Activated CD8-positive, alpha-beta memory T cell treated with anti-CD3 and anti-CD28 coated beads, Interleukin-2, amount 10 ng/mL, durations not matched to agents 7 days and 5 days (primary cell): ENCODE measurements at regions of chr7 and their contacts with region 1.

Region 1: GRCh38 chr7:106717955-106718871 is 57.3 kb upstream of the CCDC71L start:
- DNase-seq: peak; percentile 82
- ATAC-seq: peak; percentile 100
- H3K4me3 Mint-ChIP-seq: no peak overlapping the region
- H3K27ac Mint-ChIP-seq: no peak overlapping the region
- H3K4me1 Mint-ChIP-seq: peaks cover 10% of the 10 kb centered on the region
- H3K27me3 Mint-ChIP-seq: no peaks in the 10 kb centered on the region

Region 2: DNA sequence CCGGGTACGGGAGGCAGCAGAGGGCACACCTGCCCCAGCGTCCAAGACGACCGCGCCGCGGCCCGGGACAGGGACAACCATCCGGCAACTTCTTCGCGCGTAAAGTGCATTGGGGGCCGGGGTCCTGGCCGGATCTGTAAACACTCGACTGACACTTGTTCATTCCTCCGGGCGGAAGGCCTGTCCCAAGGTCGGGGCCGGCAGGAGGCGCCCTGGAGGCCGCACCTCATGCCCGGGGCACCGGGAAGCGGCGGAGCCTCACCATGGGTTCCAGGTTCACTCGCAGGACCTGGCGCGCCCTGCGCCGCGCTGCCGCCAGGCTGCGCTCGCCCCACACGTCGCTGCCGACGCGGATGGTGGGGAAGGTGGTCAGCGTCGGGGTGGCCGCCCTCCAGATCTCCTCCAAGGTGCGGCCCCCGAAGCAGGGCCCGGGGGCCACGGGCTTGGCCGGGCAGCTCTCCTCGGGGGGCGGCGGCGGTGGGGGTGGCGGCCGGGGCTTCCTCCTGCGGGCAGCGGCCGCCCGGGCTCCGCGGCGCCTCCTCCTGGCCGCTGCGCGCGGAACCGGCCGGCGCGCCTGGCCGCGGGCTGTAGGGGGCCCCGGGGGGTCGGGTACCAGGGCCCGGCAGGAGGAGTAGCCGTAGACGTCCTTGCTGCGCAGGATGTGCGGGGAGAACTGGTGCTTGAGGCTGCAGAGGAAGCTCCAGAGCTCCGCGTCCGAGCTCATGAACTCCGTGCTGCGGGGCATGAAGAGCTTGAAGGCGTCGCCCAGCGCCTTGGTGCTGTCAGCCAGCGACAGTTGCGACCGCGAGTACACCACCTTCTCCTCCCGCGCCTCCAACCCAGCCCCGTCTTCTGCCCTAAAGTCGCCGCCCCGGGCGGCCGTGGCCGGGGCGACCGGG is 58.0 kb before region 1 on chr7:
- CTCF ChIA-PET with region 1: interaction called, 33 read pairs
- DNase-seq: peak; percentile 89
- ATAC-seq: peak; percentile 70
- H3K4me3 Mint-ChIP-seq: peak overlapping the region; percentile 78
- H3K27ac Mint-ChIP-seq: peak overlapping the region; percentile 89
- H3K4me1 Mint-ChIP-seq: peaks cover 26% of the 10 kb centered on the region
- H3K27me3 Mint-ChIP-seq: no peaks in the 10 kb centered on the region

Region 3: DNA sequence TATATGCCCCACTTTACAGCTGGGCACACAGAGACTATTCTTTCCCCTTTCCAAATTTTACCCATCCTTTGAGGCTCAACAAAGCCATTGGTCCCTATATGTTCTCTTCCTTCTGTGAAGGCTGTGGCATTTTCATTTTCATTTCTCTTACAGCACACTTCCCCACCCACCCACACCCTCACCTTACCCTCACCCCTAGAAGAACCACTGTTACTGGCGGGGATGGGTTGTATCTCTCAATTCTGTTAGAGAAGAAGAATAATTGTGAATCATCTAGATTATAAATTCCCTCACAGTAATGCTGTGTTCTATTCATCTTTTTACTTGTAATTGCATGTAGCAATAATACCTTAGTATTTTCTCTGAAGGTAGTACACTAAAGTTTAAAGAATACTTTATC is 47.1 kb before region 1 on chr7:
- CTCF ChIA-PET with region 1: no interaction called
- DNase-seq: no peak
- ATAC-seq: no peak
- H3K4me3 Mint-ChIP-seq: no peak overlapping the region
- H3K27ac Mint-ChIP-seq: no peak overlapping the region
- H3K4me1 Mint-ChIP-seq: peaks cover 6% of the 10 kb centered on the region
- H3K27me3 Mint-ChIP-seq: no peaks in the 10 kb centered on the region

Region 4: DNA sequence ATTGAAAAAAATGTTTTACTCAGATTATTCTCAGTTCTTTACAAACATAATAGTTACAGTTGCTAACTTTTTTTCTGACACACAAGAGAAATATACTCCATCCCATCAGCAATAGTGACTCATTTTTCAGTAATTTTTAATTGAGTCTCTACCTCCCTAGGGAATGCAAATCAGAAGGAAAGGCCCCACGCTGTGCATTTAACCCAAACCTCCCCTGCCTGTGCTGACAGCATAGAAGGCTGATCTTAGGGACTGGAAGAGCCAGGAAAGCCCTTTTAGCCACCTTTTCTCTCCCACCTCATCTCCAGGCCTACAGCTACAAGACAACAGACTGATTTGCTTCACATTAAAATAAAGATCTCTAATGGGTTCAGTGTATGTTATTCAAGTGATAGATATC is 122.1 kb after region 1 on chr7:
- CTCF ChIA-PET with region 1: no interaction called
- DNase-seq: no peak
- ATAC-seq: no peak
- H3K4me3 Mint-ChIP-seq: no peak overlapping the region
- H3K27ac Mint-ChIP-seq: no peak overlapping the region
- H3K4me1 Mint-ChIP-seq: no peaks in the 10 kb centered on the region
- H3K27me3 Mint-ChIP-seq: peaks cover 6% of the 10 kb centered on the region